Astrocyte of the cerebellum (primary cell): ENCODE measurements at regions of chr12 and their contacts with region 1.

Region 1: GRCh38 chr12:95117178-95117599 is 43.8 kb upstream of the NR2C1 start:
- DNase-seq: peak; percentile 60
- H3K4me3 ChIP-seq: no peak overlapping the region
- CTCF ChIP-seq: peak; percentile 42

Region 2: DNA sequence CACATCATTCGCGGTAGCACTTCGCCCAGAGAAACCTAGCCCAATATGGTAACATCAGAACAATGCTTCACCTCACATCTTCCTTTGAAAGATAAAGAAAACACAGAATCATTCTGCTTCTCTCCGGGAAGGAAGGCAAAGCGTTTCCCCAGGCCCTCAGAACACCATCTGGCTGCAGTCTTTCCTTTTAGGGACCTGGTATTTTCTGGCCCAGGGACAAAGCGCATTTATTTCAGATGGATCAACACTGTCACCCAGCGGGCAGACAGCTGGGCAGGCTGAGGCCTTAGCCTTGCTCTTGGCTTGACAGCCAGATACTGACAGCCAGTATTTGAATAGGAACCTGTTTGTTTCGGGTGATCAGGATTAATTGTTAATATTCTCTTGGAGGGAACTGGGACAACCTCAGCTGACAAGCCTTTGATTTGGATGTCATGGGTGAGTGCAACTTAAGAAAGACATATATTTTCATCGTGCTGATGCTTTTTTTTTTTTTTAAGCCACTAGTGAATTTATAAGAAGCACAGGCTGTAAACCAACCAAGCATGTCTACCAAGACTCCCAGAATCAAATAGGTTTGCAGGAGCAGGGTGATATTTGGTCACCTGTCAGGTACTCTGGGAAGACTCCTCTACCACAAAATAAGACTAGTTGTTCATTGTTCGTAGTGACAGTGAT is 219.3 kb after region 1 on chr12:
- in situ Hi-C with region 1: loop called (anchors 5 kb)
- DNase-seq: peak; percentile 73
- H3K4me3 ChIP-seq: no peak overlapping the region
- CTCF ChIP-seq: peak; percentile 95

Region 3: DNA sequence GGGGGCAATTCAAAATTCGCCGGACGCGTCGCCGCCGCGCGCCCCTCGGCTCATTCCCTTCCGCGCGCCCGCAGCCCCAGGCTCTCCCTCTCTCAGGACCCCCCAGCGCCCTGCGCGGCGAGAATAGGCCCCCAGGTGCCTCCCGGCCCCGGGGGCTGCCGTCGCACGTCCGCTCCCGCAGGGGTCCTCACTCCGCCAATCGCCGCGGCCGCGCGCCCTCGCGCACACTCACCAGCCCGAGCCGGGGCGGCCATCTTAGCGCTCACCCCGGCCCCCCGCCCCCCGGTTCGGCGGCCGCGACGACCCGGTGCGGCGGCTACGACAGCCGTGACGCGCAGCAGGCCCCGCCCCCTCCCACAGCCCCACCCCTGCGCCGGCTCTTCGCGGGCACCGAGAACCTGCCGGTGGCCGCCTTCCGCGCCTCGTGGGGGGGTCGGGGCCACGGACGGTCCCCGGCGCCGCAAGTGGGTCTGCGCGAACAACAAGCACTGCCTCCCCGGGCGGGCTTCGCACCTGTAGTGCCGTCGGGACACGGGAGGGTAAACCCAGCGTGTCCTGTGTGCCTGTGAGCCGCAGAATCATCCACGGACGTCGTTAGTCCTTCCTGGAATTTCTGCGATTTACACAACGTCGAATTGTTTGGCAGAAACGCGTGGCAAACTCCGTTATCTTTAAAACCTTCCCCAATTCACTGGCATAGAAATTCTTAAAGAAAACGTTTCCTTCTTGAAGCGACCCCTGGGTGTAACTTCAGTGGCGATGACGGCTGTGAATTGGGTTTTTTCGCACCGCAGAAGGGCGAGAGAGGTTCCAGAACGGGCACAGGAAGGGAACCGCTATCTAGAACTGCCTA is 431.6 kb after region 1 on chr12:
- in situ Hi-C with region 1: loop called (anchors 25 kb)
- DNase-seq: no peak
- H3K4me3 ChIP-seq: peak overlapping the region; percentile 67
- CTCF ChIP-seq: no peak